Activated CD8-positive, alpha-beta T cell treated with anti-CD3 and anti-CD28 coated beads, Interleukin-2, amount 10 ng/mL, durations not matched to agents 7 days and 5 days (primary cell): ENCODE measurements at regions of chr18 and their contacts with region 1.

Region 1: DNA sequence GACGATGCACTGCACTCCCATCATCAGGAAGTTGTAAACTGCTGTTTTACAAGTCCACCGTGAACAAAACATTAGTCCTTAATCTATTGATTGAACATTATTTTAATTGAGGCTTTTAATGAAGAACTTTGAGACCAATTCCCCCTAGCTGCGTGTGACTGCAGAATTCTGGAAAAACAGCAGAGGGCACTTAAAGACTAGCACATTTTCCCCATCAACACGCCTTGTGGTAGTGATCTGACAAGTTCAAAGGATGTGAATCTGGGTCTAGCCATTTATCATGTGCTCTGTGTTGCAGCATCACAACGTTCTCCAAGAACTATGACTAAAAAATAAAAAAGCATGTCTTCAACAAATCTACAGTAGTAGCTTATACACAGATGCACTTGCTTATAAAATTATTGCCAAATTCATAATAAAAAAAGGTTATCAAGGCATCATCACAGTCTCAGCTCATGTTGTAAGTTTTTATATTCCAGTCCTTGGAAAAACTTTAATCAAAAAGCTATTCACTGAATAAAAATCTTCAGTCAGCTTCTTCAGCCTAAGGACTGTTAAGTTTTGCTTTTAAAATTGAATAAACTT is 35.8 kb downstream of the SKOR2 start:
- DNase-seq: peak; percentile 35
- ATAC-seq: peak; percentile 49
- H3K4me3 Mint-ChIP-seq: no peak overlapping the region
- H3K27ac Mint-ChIP-seq: no peak overlapping the region
- H3K4me1 Mint-ChIP-seq: no peaks in the 10 kb centered on the region
- H3K27me3 Mint-ChIP-seq: peaks cover 44% of the 10 kb centered on the region

Region 2: GRCh38 chr18:47748847-47749599 is 533.4 kb after region 1 on chr18:
- CTCF ChIA-PET with region 1: interaction called, 27 read pairs
- POLR2A ChIA-PET with region 1: no interaction called
- DNase-seq: peak; percentile 82
- ATAC-seq: peak; percentile 99
- H3K4me3 Mint-ChIP-seq: no peak overlapping the region
- H3K27ac Mint-ChIP-seq: no peak overlapping the region
- H3K4me1 Mint-ChIP-seq: no peaks in the 10 kb centered on the region
- H3K27me3 Mint-ChIP-seq: peaks cover 3% of the 10 kb centered on the region